GM18951 (cell line): ENCODE measurements at regions of chr1 and their contacts with region 1.

Region 1: GRCh38 chr1:207959141-207959825 is 48.4 kb upstream of the CD34 start:
- POLR2A ChIP-seq: no peak

Region 2: GRCh38 chr1:207908107-207908734 is 51.1 kb before region 1 on chr1:
- in situ Hi-C with region 1: loop called (anchors 10 kb)
- POLR2A ChIP-seq: no peak